Endothelial cell of umbilical vein (primary cell): ENCODE measurements at regions of chr4 and their contacts with region 1.

Region 1: DNA sequence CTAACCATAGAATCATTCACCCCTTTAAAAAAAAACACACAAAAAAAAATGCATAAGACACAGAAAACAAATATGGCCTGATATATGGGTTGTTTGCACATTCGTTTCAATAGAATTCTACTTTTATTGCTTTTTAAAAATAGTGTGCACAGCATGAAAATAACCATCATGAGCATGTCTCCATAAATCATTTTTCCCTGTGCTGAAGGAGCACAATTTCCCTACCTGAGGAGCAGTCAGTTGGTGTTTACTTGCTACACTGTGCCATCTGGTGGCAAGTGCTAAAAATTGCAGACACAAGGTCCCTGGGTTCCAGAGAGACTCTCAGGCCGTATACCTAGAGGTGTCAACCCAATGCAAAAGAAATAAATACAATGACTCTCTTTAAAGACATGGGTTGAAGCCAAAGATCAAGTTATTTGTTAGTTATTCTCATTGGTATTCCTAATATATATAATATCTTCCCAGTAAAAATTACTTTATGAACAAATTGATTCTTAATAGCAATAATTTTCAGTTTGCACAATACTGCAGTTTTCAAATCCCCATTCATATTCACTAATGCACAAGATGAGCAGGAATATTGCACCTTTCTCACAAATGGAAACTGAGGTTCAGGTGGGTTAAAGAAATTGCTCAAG is 551.4 kb downstream of the IQCM start:
- DNase-seq: peak; percentile 55
- H3K4me3 ChIP-seq: no peak overlapping the region
- H3K27ac ChIP-seq: no peak overlapping the region
- H3K4me1 ChIP-seq: peaks cover 3% of the 10 kb centered on the region
- H3K27me3 ChIP-seq: no peaks in the 10 kb centered on the region
- CTCF ChIP-seq: peak; percentile 48 to 55
- POLR2A ChIP-seq: no peak

Region 2: GRCh38 chr4:147879676-147880075 is 1384.5 kb before region 1 on chr4:
- CTCF ChIA-PET with region 1: no interaction called
- POLR2A ChIA-PET with region 1: no interaction called
- dilution Hi-C with region 1: no loop called
- intact Hi-C with region 1: loop called (anchors 5 kb)
- DNase-seq: no peak
- H3K4me3 ChIP-seq: no peak overlapping the region
- H3K27ac ChIP-seq: no peak overlapping the region
- H3K4me1 ChIP-seq: no peaks in the 10 kb centered on the region
- H3K27me3 ChIP-seq: no peaks in the 10 kb centered on the region
- CTCF ChIP-seq: no peak
- POLR2A ChIP-seq: no peak

Region 3: DNA sequence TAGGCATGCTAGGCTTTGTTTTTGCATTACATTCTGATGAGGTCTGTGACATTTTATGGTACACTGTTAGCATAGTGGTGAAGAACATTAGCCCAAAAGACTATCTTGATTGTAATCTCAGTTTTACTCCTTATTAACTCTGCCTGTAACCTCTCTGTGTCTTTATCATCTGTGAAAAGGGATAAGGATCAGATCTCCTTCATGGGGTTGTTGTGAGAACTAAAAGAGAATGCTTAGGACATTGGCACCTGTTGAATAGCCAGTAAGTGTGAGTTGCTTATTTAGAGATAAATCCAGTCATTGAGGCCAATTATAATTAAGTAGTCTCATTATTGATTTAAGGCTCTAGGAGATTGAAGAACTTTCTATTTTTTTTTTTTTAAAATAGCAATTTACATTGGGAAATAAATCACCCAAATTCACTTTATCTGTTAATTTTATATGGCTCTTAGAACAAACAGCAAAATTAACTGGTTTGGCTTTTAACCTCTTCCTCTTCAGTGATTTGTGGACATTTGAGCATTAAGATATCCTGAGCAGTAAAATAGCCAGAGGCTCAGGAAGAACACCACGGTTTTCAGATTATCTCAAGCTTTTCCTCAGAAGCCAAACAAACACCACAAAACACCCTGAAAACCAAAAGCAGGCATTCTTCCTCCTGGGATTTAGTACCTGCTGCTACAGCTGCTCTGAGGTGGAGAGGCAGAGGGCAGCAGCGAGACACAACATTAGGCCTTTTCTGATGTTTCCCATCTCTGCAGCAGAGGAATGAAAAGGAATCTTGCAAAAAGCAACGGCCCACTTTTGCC is 1339.4 kb before region 1 on chr4:
- CTCF ChIA-PET with region 1: interaction called, 8 read pairs
- POLR2A ChIA-PET with region 1: no interaction called
- dilution Hi-C with region 1: no loop called
- intact Hi-C with region 1: loop called (anchors 5 kb)
- DNase-seq: peak; percentile 65
- H3K4me3 ChIP-seq: no peak overlapping the region
- H3K27ac ChIP-seq: no peak overlapping the region
- H3K4me1 ChIP-seq: peaks cover 19% of the 10 kb centered on the region
- H3K27me3 ChIP-seq: no peaks in the 10 kb centered on the region
- CTCF ChIP-seq: peak; percentile 28 to 64
- POLR2A ChIP-seq: no peak

Region 4: DNA sequence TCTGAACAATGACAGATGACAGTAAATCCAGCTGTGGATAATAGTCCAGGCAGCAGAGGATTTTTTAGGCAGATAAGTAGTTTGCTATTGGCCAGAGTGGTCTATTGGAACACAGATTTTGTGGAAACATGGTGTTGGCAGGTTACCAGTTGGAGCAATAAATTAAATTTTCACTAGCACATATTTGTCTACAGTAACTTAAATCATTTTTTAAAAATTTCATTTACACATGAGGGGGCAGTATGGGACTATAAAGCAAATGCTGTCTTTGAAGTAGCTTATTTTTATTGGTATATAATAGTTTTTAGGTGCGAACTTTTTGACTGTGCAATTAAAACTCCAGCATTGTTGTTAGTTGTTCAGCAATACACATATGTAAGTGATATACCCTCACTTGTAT is 1242.5 kb before region 1 on chr4:
- CTCF ChIA-PET with region 1: interaction called, 4 read pairs
- POLR2A ChIA-PET with region 1: no interaction called
- dilution Hi-C with region 1: no loop called
- intact Hi-C with region 1: loop called (anchors 5 kb)
- DNase-seq: peak; percentile 21
- H3K4me3 ChIP-seq: no peak overlapping the region
- H3K27ac ChIP-seq: no peak overlapping the region
- H3K4me1 ChIP-seq: peaks cover 14% of the 10 kb centered on the region
- H3K27me3 ChIP-seq: no peaks in the 10 kb centered on the region
- CTCF ChIP-seq: no peak
- POLR2A ChIP-seq: no peak

Region 5: GRCh38 chr4:148288448-148288847 is 975.8 kb before region 1 on chr4:
- CTCF ChIA-PET with region 1: interaction called, 7 read pairs
- POLR2A ChIA-PET with region 1: no interaction called
- dilution Hi-C with region 1: no loop called
- intact Hi-C with region 1: loop called (anchors 1 kb)
- DNase-seq: peak; percentile 27
- H3K4me3 ChIP-seq: no peak overlapping the region
- H3K27ac ChIP-seq: no peak overlapping the region
- H3K4me1 ChIP-seq: no peaks in the 10 kb centered on the region
- H3K27me3 ChIP-seq: no peaks in the 10 kb centered on the region
- CTCF ChIP-seq: no peak
- POLR2A ChIP-seq: no peak

Region 6: GRCh38 chr4:149008415-149009025 is 255.7 kb before region 1 on chr4:
- CTCF ChIA-PET with region 1: no interaction called
- POLR2A ChIA-PET with region 1: no interaction called
- dilution Hi-C with region 1: no loop called
- intact Hi-C with region 1: loop called (anchors 10 kb)
- DNase-seq: no peak
- H3K4me3 ChIP-seq: no peak overlapping the region
- H3K27ac ChIP-seq: no peak overlapping the region
- H3K4me1 ChIP-seq: no peaks in the 10 kb centered on the region
- H3K27me3 ChIP-seq: peaks cover 0 to 2% of the 10 kb centered on the region in 2 experiments
- CTCF ChIP-seq: no peak
- POLR2A ChIP-seq: no peak